Sigmoid colon (tissue), 7 donors: ENCODE measurements at regions of chr19 and their contacts with region 1.

Region 1: DNA sequence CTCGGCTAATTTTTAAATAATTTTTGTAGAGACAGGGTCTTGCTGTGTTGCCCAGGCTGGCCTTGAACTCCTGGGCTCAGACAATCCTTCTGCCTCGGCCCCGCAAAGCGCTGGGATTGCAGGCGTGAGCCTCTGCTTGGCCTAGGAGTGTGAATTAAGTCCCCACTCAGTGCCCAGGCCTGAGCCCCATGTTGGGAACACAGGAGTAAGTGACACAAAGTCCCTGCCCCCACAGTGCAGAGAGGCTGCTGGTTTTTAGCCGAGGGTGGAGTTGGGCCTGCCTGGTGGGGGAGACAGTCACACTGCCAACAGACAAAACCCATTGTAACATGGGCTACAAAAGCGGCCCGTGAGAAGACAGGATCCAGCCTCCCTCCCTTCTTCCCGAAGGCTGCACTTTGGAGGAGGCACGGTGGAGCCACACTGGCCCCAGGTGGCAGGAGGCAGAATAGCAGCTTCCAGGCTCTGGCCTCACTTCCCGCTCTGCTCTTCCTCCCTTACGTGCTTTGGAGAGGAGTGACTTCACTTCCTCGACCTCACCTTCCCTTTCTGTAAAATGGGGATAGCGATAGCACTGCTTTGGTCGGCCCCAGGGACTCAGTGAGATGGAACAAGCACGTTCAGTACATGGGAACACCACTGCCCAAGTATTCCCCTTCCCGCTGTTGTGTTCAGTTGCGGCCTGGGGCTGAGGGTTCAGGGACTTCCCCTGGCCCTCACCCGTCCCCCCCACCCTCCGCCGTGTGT is 15.2 kb upstream of the EHD2 start:
- DNase-seq: peak; percentile 94
- H3K4me3 ChIP-seq: no peak overlapping the region
- H3K27ac ChIP-seq: peak overlapping the region; percentile 63 to 83 (median 82)
- H3K4me1 ChIP-seq: peaks cover 0 to 6% (median 5%) of the 10 kb centered on the region in 4 donors
- H3K27me3 ChIP-seq: no peaks in the 10 kb centered on the region
- CTCF ChIP-seq: peak; percentile 96 to 99 (median 98)
- EP300 ChIP-seq: no peak
- POLR2A ChIP-seq: no peak

Region 2: GRCh38 chr19:47506459-47506858 is 191.6 kb before region 1 on chr19:
- intact Hi-C with region 1: no loop called
- DNase-seq: no peak
- H3K4me3 ChIP-seq: no peak overlapping the region
- H3K27ac ChIP-seq: peak overlapping the region in 3 of 4 donors; percentile 51 to 100 (median 98)
- H3K4me1 ChIP-seq: peaks cover 0 to 57% (median 53%) of the 10 kb centered on the region in 4 donors
- H3K27me3 ChIP-seq: no peaks in the 10 kb centered on the region
- CTCF ChIP-seq: no peak
- EP300 ChIP-seq: no peak
- POLR2A ChIP-seq: no peak

Region 3: DNA sequence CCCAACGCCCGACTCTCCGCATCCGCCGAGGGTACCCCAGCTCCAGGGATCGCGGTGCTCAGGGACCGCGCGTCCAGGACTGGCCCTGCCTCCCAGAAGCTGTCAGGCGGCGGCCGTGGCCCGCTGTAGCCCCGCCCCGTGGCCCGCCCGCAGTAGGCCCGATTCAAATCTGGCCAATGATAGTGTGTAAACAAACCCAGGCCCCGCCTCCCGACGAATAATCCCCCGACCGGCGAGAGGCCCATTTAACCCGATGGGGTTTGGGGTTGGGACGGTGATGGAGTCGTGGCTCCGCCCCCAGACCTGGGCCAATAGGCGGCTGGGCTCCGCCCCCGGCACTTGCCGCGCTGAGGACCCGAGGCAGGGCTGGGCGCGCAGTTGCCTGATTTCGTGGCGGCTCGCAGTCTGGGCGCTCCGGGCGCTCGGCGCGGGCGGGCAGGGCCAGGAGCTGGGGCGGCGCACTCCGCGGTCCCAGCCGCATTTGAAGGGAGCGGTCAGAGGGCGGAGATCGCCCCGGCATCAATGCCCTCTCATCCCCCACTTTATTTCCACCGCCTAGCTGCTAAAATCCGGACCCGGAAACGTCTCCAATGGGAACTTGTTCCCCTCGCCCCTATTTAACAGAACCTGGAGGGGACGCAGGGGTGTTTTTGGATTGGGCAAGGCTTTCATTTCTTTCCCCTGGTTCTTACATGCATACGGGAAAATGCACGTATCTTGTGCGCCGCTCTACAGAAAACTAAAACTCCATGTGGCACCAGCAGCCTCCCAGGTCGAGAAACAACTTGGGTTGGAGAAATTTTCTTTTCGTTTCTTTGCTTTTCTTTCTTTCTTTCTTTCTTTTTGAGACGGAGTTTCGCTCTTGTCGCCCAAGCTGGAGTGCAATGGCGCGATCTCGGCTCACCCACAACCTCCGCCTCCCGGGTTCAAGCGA is 97.5 kb before region 1 on chr19:
- intact Hi-C with region 1: loop called (anchors 2 kb)
- DNase-seq: peak; percentile 100
- H3K4me3 ChIP-seq: peak overlapping the region; percentile 49 to 56 (median 52)
- H3K27ac ChIP-seq: peak overlapping the region; percentile 89 to 94 (median 92)
- H3K4me1 ChIP-seq: peaks cover 0 to 23% (median 21%) of the 10 kb centered on the region in 4 donors
- H3K27me3 ChIP-seq: no peaks in the 10 kb centered on the region
- CTCF ChIP-seq: no peak
- EP300 ChIP-seq: peak in 1 of 4 donors; percentile 83
- POLR2A ChIP-seq: peak; percentile 84 to 85

Region 4: GRCh38 chr19:47608074-47608918 is 89.7 kb before region 1 on chr19:
- intact Hi-C with region 1: loop called (anchors 2 kb)
- DNase-seq: peak; percentile 97
- H3K4me3 ChIP-seq: peak overlapping the region; percentile 70 to 98 (median 86)
- H3K27ac ChIP-seq: peak overlapping the region; percentile 95 to 98 (median 98)
- H3K4me1 ChIP-seq: peaks cover 0 to 44% (median 39%) of the 10 kb centered on the region in 4 donors
- H3K27me3 ChIP-seq: no peaks in the 10 kb centered on the region
- CTCF ChIP-seq: peak in 3 of 4 experiments; percentile 28 to 57 (median 44)
- EP300 ChIP-seq: no peak
- POLR2A ChIP-seq: peak; percentile 76 to 77

Region 5: DNA sequence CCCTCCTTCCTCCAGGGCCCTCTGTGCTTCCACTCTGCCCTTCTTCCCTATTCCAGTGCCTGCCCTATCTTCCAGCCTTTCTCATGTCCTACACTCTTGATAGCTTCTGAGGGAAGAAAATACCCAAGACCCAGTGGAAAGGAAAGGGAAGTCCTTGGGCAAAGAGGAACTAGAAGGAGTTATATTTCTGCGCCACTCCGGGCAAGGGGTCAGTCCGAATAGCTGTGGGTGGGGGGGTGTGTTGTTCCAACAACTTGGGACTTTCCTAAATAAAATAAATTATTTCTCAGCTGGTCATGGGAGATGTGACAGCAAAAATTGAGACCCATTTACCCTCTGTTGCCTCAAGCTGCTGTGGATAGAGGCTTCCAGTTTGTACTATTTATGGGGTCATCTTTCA is 322.6 kb after region 1 on chr19:
- intact Hi-C with region 1: no loop called
- DNase-seq: no peak
- H3K4me3 ChIP-seq: no peak overlapping the region
- H3K27ac ChIP-seq: no peak overlapping the region
- H3K4me1 ChIP-seq: no peaks in the 10 kb centered on the region
- H3K27me3 ChIP-seq: peaks cover 0 to 8% (median 0%) of the 10 kb centered on the region in 3 donors
- CTCF ChIP-seq: no peak
- EP300 ChIP-seq: no peak
- POLR2A ChIP-seq: no peak